Right ventricle myocardium inferior (tissue), 1 donor: ENCODE measurements at regions of chr1 and their contacts with region 1.

Region 1: DNA sequence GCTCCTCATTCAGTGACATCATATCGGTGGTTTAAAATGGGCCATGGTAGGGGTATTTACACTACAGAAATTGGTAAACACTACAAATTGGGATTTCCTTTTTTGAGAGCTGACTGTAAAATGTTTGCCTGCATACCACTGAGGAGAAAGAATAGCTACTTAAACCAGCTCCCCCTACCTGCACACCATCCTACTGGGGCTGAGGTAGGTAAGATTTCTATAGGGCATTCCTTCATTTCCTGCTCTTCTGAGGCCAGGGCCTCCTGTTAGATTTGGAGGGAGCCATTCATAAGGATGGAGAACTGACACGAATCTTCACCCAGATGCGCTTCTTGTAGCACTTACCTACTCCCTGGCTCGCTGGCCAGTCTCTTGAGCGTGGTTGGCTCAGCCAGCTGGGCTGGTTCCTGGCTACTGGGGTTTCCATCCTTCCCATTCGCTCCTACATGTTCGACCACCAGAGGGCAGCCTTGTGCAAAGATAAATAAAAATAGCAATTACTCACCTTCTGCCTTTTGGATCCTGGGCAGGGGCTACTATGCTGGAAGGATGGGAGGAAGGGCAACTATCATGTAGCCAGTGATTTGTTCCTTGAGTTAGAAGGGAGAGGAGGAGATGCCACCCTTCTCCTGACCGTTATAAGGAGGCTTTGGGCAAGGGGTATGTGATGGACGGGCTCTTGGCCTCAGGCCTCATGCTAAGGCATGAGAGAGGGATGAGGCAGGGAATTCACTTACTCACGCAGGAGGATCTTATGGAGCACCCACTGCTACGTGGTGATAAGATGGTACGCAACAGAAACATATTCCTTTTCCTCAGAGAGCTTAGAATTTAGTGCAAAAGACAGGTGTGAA is 10.7 kb downstream of the OPTC start:
- DNase-seq: peak; percentile 85
- ATAC-seq: peak; percentile 49

Region 2: GRCh38 chr1:203558064-203558760 is 53.6 kb after region 1 on chr1:
- intact Hi-C with region 1: loop called (anchors 5 kb)
- DNase-seq: no peak
- ATAC-seq: peak; percentile 59

Region 3: GRCh38 chr1:203615061-203615581 is 110.5 kb after region 1 on chr1:
- intact Hi-C with region 1: loop called (anchors 1 kb)
- DNase-seq: no peak
- ATAC-seq: no peak

Region 4: DNA sequence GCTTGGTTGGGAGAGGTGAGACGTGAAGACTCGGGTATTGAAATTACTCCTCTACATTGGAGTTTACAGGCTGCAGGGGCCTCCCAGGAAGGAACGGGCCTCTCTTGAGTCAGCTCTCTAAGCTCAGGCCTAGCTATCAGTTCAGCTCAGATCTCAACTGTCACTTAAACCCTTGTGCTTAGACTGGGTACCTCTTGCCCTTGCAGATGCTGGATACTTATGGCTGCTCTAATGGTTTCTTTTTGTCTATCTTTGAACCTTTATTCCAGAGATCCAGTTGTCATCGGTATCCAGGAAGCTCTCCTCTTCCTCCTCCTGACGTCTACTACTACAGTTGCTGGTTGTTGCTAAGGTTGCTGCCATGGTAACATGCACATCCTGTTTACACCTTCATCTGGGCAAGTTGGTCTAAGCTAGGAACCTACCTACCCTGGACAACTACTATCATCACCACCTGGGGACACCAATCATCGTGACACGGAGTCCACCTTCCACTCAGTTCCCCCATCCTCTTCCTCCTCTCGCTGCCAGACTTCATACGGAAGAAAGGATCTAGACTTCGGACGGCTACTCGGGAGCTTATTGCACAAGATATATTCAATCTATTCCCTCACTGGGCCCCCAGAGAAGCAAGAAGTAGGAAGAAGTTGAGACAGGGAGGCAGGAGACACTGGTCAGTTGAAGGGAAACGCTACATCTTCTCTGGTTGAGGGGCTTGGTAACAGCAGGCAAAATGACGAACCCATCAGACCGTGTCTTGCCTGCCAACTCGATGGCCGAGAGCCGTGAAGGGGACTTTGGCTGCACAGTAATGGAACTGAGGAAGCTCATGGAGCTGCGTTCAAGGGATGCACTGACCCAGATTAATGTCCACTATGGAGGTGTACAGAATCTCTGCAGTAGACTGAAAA is 178.1 kb after region 1 on chr1:
- intact Hi-C with region 1: no loop called
- DNase-seq: no peak
- ATAC-seq: no peak

Region 5: DNA sequence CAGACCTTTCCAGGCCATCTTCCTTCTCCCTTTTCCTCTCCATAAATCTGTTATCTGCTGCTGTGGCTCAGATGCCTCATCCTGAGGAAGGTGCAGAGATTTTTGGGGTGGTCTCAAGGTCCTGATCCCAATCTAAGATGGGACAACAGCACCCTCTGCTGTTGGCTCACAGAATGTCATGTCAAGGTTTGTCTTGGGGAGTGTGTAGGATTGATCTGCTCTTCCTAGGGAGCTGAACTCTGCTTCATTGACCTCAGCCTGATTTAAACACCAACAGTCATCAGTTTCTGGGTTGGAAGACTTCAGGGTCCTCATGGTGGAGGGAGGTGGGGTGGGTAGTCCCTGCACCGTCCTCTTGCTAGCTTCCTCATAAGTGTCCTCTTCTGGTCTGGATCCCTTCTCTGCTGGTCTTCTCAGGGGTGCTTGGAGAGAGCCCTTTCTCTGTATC is 197.5 kb after region 1 on chr1:
- intact Hi-C with region 1: loop called (anchors 1 kb)
- DNase-seq: peak; percentile 68
- ATAC-seq: peak; percentile 53